Activated naive CD4-positive, alpha-beta T cell treated with anti-CD3 and anti-CD28 coated beads for 36 hours (primary cell): ENCODE measurements at regions of chr7 and their contacts with region 1.

Region 1: DNA sequence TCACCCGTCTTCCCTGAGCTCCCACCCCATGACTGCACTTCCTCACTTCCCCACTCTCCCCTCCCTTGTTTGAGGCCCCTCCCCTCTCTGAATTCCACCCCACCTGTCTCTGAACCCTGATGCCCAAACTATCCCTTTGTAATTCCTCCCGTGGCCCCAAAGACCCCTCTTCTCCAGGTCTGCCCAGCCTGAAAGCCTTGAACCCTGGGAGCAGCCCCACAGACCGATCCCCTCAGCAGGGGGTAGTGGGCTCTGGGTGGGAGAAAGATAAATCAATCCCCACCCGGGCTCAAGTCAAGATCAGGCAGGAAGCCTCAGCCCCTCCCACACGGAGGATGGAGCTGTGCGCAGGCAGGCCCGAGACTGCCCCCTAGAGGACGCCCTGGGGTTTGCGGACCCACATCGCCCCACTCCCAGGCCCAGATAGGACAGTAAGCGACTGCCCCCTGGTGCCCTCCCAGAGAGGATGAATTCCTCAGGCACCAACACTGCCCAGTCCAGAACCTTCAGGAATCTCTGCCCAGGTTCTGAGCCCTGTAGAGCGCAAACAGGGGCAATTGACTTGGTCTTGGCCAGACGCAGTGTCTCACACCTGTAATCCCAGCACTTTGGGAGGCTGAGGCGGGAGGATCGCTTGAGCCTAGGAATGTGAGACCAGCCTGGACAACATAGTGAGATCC is 11.7 kb downstream of the HSPB1 start:
- DNase-seq: peak; percentile 99
- H3K4me3 Mint-ChIP-seq: no peak overlapping the region
- H3K27ac Mint-ChIP-seq: no peak overlapping the region
- H3K4me1 Mint-ChIP-seq: peaks cover 18% of the 10 kb centered on the region
- H3K27me3 Mint-ChIP-seq: no peaks in the 10 kb centered on the region

Region 2: GRCh38 chr7:75937958-75938786 is 376.0 kb before region 1 on chr7:
- CTCF ChIA-PET with region 1: no interaction called
- intact Hi-C with region 1: no loop called
- DNase-seq: no peak
- H3K4me3 Mint-ChIP-seq: no peak overlapping the region
- H3K27ac Mint-ChIP-seq: no peak overlapping the region
- H3K4me1 Mint-ChIP-seq: no peaks in the 10 kb centered on the region
- H3K27me3 Mint-ChIP-seq: no peaks in the 10 kb centered on the region

Region 3: GRCh38 chr7:76011442-76011861 is 302.7 kb before region 1 on chr7:
- CTCF ChIA-PET with region 1: no interaction called
- intact Hi-C with region 1: loop called (anchors 5 kb)
- DNase-seq: no peak
- H3K4me3 Mint-ChIP-seq: no peak overlapping the region
- H3K27ac Mint-ChIP-seq: no peak overlapping the region
- H3K4me1 Mint-ChIP-seq: peaks cover 25% of the 10 kb centered on the region
- H3K27me3 Mint-ChIP-seq: peaks cover 2% of the 10 kb centered on the region

Region 4: DNA sequence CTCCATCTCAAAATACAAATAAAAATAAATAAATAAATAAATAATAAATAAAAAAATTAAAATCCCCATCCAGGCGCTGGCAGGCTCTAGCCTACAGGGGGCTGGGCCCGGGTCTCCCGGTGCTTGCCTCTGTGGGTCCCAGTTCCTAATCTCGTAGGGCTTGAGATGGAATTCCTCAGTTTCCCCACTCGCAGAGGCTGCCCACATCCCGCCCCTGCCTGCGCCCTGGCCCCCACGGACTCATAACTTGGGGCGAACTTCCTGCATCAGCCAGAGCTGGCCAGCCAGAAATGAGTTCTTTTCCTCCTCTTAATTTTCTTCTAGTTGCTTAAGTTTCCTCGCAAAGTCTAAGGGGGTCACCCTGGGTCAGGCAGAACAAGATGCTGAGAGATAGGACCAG is 134.5 kb before region 1 on chr7:
- CTCF ChIA-PET with region 1: interaction called, 103 read pairs
- intact Hi-C with region 1: loop called (anchors 1 kb)
- DNase-seq: no peak
- H3K4me3 Mint-ChIP-seq: no peak overlapping the region
- H3K27ac Mint-ChIP-seq: no peak overlapping the region
- H3K4me1 Mint-ChIP-seq: peaks cover 3% of the 10 kb centered on the region
- H3K27me3 Mint-ChIP-seq: no peaks in the 10 kb centered on the region

Region 5: DNA sequence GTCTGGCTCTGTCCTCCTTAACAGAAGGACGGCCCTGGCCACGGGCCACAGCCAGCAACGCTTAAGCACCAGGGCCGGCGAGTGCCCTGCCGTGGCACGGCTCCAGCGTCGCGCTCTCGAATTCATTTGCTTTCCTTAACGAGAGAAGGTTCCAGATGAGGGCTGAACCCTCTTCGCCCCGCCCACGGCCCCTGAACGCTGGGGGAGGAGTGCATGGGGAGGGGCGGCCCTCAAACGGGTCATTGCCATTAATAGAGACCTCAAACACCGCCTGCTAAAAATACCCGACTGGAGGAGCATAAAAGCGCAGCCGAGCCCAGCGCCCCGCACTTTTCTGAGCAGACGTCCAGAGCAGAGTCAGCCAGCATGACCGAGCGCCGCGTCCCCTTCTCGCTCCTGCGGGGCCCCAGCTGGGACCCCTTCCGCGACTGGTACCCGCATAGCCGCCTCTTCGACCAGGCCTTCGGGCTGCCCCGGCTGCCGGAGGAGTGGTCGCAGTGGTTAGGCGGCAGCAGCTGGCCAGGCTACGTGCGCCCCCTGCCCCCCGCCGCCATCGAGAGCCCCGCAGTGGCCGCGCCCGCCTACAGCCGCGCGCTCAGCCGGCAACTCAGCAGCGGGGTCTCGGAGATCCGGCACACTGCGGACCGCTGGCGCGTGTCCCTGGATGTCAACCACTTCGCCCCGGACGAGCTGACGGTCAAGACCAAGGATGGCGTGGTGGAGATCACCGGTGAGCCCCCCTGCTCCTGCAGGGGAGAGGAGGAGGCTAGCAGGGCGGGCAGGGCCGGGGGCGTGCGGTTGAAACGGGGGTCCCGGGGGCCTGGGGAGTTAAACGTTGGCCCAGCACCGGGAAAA is 11.6 kb before region 1 on chr7 and contains the start of gene HSPB1:
- CTCF ChIA-PET with region 1: interaction called, 21 read pairs
- intact Hi-C with region 1: loop called (anchors 1 kb)
- DNase-seq: peak; percentile 64
- H3K4me3 Mint-ChIP-seq: peak within 1 kb of the TSS; percentile 87
- H3K27ac Mint-ChIP-seq: peak within 1 kb of the TSS; percentile 86
- H3K4me1 Mint-ChIP-seq: peaks cover 16% of the 10 kb centered on the region
- H3K27me3 Mint-ChIP-seq: peaks cover 6% of the 10 kb centered on the region
- total RNA-seq, gene HSPB1: 106 to 115 TPM

Region 6: DNA sequence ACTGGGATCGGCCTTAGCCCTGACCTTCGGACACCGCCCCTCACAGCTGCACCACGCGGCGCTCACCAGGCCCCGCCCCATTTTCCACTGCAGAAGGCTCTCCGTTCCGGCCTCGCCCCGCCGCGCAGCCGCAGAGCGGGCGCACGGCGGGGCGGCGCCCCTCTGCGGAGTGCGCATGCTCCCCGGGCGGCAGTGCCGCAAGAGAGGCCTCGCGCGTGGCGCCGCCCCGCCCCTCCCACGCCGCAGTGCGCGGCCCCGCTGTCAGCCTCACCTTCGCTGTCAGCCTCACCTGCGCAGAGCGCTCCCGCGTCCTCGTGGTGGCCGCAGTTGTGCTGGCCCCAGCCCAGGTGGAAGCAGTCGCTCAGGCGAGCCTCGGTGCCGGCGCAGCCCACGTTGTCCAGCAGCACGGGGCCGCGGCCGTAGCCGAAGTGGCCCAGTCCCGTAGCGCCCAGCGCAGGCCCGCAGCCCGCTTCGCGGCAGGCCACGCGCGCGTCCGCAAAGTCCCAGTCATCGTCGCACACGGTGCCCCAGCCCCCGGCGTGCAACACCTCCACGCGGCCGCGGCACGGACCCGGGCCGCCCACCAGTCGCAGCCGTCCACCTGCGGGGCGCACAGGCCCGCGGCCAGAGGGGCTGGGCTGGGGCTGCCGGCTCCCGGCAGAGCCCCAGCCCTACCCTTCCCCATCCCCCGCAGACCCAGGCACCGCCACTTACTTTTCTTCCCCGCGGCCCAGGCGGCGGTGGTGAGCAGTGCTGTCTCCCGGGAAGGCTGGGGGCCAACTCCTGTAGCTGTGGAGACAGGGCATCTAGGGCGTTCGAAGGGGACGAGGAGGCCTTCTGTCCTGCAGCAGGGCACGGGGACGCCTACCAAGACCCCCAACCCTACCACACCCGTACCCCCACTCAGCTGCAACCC is 79.2 kb after region 1 on chr7:
- CTCF ChIA-PET with region 1: no interaction called
- intact Hi-C with region 1: loop called (anchors 1 kb)
- DNase-seq: peak; percentile 89
- H3K4me3 Mint-ChIP-seq: peak overlapping the region; percentile 85
- H3K27ac Mint-ChIP-seq: peak overlapping the region; percentile 92
- H3K4me1 Mint-ChIP-seq: peaks cover 23% of the 10 kb centered on the region
- H3K27me3 Mint-ChIP-seq: no peaks in the 10 kb centered on the region